WTC11 (cell line): ENCODE measurements at regions of chr5 and their contacts with region 1.

Region 1: DNA sequence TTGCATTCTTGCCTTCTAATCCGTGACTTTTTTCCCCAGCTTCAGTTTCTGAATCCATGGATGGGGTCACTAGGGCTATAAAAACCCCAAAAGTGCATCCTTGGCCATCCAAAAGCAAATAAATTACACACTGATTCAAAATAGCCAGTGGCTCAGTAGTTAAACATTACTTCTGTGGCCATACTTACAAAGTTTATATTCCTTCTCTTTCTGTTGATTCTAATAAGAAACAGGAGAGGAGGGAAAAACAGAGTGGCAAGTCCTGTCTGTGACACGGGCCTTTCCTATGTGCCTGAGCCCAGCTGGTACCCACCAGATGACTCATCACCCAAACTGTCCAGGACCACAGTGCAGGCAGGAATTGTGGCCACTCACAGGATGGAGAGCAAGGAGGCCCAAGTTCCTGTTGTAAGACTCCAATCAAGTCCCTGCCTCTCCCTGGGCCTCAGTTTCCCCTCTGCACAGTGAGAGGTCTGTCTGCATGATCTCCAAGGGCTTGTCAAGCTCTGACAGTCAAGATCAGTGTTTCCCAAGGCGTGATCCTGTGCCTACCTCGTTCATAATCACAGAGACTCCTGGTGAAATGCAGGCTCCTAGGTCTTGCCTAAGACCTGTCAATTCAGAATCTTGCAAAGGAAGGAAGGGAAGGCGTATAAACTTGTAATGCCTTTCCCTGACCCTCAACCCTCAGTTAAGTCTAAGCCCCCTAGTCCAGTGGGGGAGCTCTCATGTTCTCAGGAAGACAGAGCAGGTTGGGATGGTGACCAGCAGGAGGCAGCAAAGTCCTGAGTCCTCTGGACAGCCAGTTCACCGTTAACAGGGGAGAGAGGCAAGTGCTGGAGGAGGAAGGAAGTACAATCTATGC is 29.5 kb downstream of the TNIP1 start:
- DNase-seq: peak; percentile 89
- ATAC-seq: peak; percentile 88
- H3K4me3 Mint-ChIP-seq: no peak overlapping the region
- H3K27ac Mint-ChIP-seq: no peak overlapping the region
- H3K4me1 Mint-ChIP-seq: no peaks in the 10 kb centered on the region
- H3K27me3 Mint-ChIP-seq: no peaks in the 10 kb centered on the region
- CTCF ChIP-seq: peak; percentile 71

Region 2: DNA sequence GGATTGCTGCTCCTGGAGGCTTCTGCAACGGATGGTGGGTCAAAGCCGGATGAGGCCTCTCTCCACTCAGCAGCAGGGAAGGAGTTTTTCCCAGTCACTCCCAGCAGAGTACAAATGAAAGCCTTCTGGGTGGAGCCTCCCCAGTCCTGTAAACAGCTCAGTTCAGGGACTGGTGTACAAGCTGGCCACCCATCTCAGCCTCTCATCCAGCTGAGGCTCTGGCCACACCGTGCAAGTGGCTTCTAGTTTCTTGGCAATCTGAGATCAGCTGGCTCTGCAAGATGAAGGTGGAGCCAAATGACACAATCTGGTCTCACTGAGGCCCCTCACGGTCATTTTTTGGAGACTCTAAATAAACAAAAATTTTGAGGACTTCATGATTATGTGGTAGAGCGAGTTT is 20.9 kb before region 1 on chr5:
- CTCF ChIA-PET with region 1: interaction called, 19 read pairs
- POLR2A ChIA-PET with region 1: no interaction called
- DNase-seq: no peak
- ATAC-seq: no peak
- H3K4me3 Mint-ChIP-seq: no peak overlapping the region
- H3K27ac Mint-ChIP-seq: no peak overlapping the region
- H3K4me1 Mint-ChIP-seq: no peaks in the 10 kb centered on the region
- H3K27me3 Mint-ChIP-seq: no peaks in the 10 kb centered on the region
- CTCF ChIP-seq: no peak

Region 3: DNA sequence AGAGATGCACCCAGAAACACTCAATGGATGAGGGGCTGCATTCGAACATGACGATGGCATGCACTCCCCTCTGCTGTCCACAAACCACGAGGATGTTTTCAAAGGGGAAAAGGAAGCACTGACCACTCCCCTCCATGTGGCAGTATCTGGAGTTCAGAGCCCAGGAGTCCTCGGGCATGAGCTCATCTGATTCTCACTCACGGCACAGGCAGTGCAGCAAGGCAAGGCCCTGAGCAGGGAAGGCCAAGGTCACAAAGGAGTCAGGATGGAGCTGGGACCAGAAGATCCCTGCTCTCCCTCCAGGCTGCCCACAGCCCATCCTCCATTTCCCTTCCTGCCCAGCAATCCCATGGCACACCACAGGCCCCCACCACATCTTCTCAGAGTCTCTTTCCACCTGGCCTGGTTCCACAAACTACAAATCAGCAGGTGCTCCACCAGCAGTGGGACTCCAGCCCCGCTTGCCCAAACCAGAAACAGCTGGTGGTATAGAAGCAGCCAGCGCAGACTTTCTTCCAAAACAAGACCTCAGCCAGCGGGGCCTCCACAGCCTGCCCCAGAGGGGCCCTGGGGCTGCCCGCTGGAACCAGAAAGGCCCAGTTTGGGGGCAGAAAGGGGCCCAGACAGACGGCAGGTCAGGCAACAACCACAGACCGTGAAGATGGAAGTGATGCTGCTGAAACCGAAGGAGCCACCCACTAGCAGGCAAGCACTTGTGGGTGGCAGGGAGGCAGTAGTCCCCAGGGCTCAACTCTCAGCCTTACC is 17.3 kb after region 1 on chr5:
- CTCF ChIA-PET with region 1: interaction called, 37 read pairs
- POLR2A ChIA-PET with region 1: no interaction called
- DNase-seq: no peak
- ATAC-seq: no peak
- H3K4me3 Mint-ChIP-seq: no peak overlapping the region
- H3K27ac Mint-ChIP-seq: no peak overlapping the region
- H3K4me1 Mint-ChIP-seq: peaks cover 17% of the 10 kb centered on the region
- H3K27me3 Mint-ChIP-seq: no peaks in the 10 kb centered on the region
- CTCF ChIP-seq: no peak

Region 4: DNA sequence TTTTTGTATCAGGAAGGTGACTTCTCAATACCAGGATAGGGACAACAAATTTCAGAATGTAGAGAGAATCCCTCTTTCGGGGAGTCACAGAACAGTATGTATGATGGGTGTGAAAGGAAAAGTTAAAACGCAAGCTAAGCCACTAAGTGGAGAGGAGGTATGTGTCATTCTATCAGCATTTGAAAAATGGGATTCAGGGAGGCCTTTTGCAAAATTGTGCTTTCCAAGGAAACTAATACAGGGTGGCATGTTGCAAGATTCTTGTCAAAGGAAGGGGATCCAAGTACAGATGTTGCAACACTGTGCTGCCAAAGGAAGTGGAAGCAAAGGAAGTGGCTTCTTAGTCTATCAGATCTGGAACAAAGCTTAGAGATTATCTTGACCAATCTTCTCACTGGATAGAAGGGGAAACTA is 42.2 kb after region 1 on chr5:
- CTCF ChIA-PET with region 1: interaction called, 22 read pairs
- POLR2A ChIA-PET with region 1: no interaction called
- DNase-seq: no peak
- ATAC-seq: no peak; the same call in 1 of the 2 replicates
- H3K4me3 Mint-ChIP-seq: no peak overlapping the region
- H3K27ac Mint-ChIP-seq: no peak overlapping the region
- H3K4me1 Mint-ChIP-seq: peaks cover 29% of the 10 kb centered on the region
- H3K27me3 Mint-ChIP-seq: no peaks in the 10 kb centered on the region
- CTCF ChIP-seq: no peak

Region 5: DNA sequence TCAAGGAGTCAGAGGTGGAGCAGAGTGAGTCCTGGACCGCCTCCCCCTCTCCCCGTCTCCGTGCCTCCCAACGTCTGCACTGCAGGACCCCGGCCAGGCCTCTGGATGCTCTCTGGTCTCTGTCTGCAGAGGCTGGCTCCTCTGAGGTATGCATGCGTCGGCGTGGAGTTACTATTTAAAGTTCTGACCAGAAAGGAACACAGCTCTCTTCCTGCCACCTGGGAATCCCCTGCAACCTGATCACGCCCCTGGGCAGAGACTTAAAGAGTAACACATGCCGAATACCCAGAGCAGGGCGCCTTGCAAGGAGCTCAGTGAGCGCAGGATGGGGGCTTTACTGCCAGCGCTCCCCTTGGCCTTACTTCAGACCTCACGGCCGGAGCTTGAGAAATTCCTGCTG is 90.2 kb after region 1 on chr5:
- CTCF ChIA-PET with region 1: interaction called, 15 read pairs
- POLR2A ChIA-PET with region 1: no interaction called
- DNase-seq: peak; percentile 60
- ATAC-seq: peak; percentile 85
- H3K4me3 Mint-ChIP-seq: no peak overlapping the region; the same call in 1 of the 2 replicates
- H3K27ac Mint-ChIP-seq: peak overlapping the region; percentile 93
- H3K4me1 Mint-ChIP-seq: peaks cover 18% of the 10 kb centered on the region
- H3K27me3 Mint-ChIP-seq: no peaks in the 10 kb centered on the region
- CTCF ChIP-seq: no peak

Region 6: DNA sequence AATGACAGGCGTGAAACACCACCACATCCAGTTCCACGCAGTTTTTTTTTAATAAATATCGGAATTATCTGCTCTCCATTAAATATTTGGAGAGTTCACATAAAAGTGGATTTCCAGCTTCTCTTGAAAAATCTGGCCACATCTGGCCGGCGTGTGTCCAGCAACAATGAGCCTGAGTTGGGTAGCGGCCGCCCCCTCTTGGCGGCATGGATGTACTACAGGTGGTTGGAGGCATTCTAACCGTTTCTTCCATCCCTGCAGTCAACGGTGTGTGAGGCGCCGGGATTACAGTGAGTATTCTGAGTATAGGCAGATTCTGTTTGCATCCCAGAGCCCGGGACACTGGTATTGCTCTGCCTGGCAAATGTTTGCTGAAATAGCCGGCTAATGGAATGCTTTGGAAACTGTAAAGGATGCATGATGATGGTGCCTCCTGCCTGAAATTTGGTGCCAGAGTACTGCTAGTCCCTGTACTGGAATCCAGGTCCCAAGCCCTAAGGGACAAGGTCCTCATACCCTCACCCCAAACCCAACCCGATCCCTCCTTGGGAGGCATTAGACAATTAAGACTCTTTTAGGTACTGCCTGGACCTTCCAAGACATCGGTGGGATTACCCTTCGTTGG is 188.1 kb after region 1 on chr5:
- CTCF ChIA-PET with region 1: interaction called, 17 read pairs
- POLR2A ChIA-PET with region 1: no interaction called
- DNase-seq: peak; percentile 81
- ATAC-seq: peak; percentile 83
- H3K4me3 Mint-ChIP-seq: no peak overlapping the region
- H3K27ac Mint-ChIP-seq: no peak overlapping the region; the same call in 1 of the 2 replicates
- H3K4me1 Mint-ChIP-seq: peaks cover 35% of the 10 kb centered on the region
- H3K27me3 Mint-ChIP-seq: no peaks in the 10 kb centered on the region
- CTCF ChIP-seq: peak; percentile 91